Gastrocnemius medialis (tissue), 4 donors: ENCODE measurements at regions of chrX and their contacts with region 1.

Region 1: DNA sequence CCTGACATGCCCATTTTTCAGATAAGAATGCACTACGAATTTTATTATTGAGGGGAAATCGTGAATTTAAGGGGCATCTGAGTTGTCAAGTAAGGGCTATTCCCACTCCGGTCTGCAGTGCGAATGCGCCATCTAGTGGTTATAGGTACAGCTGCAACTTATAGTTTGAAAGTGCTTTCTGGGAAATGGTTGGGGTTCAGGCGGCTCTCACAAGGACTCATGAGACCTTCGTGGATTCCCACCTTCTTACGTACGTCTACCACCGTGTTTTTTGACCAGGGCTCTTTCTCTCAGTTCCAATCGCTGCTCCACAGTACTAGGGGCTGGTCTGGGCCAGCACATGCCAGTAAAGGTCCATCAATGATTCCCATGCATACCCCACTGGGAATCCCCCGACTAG is 12.3 kb downstream of the MSL3 start:
- DNase-seq: peak in 1 of 2 donors; percentile 25
- ATAC-seq: peak in 1 of 2 donors; percentile 62
- H3K4me3 ChIP-seq: no peak overlapping the region
- H3K27ac ChIP-seq: no peak overlapping the region
- H3K4me1 ChIP-seq: no peaks in the 10 kb centered on the region
- H3K27me3 ChIP-seq: no peaks in the 10 kb centered on the region
- CTCF ChIP-seq: peak; percentile 54 to 82 (median 75)
- POLR2A ChIP-seq: no peak

Region 2: GRCh38 chrX:11111038-11111851 is 659.1 kb before region 1 on chrX and contains the start of gene HCCS:
- in situ Hi-C with region 1: no loop called
- intact Hi-C with region 1: loop called (anchors 5 kb)
- DNase-seq: peak; percentile 69 to 82
- ATAC-seq: peak; percentile 92 to 98
- H3K4me3 ChIP-seq: peak within 1 kb of the TSS; percentile 65 to 81 (median 71)
- H3K27ac ChIP-seq: peak within 1 kb of the TSS; percentile 84 to 90 (median 88)
- H3K4me1 ChIP-seq: peaks cover 4 to 15% of the 10 kb centered on the region in 2 donors
- H3K27me3 ChIP-seq: no peaks in the 10 kb centered on the region
- CTCF ChIP-seq: no peak
- POLR2A ChIP-seq: peak; percentile 75 to 82
- total RNA-seq, gene HCCS: 10.4 to 25.2 (median 21.1) TPM

Region 3: GRCh38 chrX:11724122-11725017 is 46.0 kb before region 1 on chrX:
- in situ Hi-C with region 1: no loop called
- intact Hi-C with region 1: loop called (anchors 2 kb)
- DNase-seq: no peak
- ATAC-seq: peak; percentile 47 to 56
- H3K4me3 ChIP-seq: peak overlapping the region in 1 of 4 donors; percentile 16
- H3K27ac ChIP-seq: no peak overlapping the region
- H3K4me1 ChIP-seq: peaks cover 0 to 3% of the 10 kb centered on the region in 2 donors
- H3K27me3 ChIP-seq: no peaks in the 10 kb centered on the region
- CTCF ChIP-seq: peak; percentile 61 to 67 (median 66)
- POLR2A ChIP-seq: no peak